Ascending aorta (tissue), 2 donors: ENCODE measurements at regions of chr15 and their contacts with region 1.

Region 1: GRCh38 chr15:67048281-67049279 is 16.8 kb upstream of the SMAD3 start:
- DNase-seq: peak; percentile 40 to 91
- H3K4me3 ChIP-seq: no peak overlapping the region
- H3K27ac ChIP-seq: peak overlapping the region; percentile 94 to 95
- H3K4me1 ChIP-seq: peaks cover 12 to 66% of the 10 kb centered on the region in 2 donors
- H3K27me3 ChIP-seq: no peaks in the 10 kb centered on the region
- CTCF ChIP-seq: no peak

Region 2: GRCh38 chr15:66761726-66762589 is 286.6 kb before region 1 on chr15:
- intact Hi-C with region 1: no loop called
- DNase-seq: no peak
- H3K4me3 ChIP-seq: no peak overlapping the region
- H3K27ac ChIP-seq: peak overlapping the region; percentile 76 to 95
- H3K4me1 ChIP-seq: peaks cover 37 to 83% of the 10 kb centered on the region in 2 donors
- H3K27me3 ChIP-seq: no peaks in the 10 kb centered on the region
- CTCF ChIP-seq: no peak

Region 3: GRCh38 chr15:66883322-66883911 is 165.2 kb before region 1 on chr15:
- intact Hi-C with region 1: loop called (anchors 5 kb)
- DNase-seq: peak; percentile 80 to 99
- H3K4me3 ChIP-seq: no peak overlapping the region
- H3K27ac ChIP-seq: peak overlapping the region; percentile 63 to 73
- H3K4me1 ChIP-seq: peaks cover 6 to 27% of the 10 kb centered on the region in 2 donors
- H3K27me3 ChIP-seq: no peaks in the 10 kb centered on the region
- CTCF ChIP-seq: no peak

Region 4: GRCh38 chr15:67024314-67024997 is 24.1 kb before region 1 on chr15:
- intact Hi-C with region 1: loop called (anchors 1 kb)
- DNase-seq: peak; percentile 55 to 93
- H3K4me3 ChIP-seq: no peak overlapping the region
- H3K27ac ChIP-seq: peak overlapping the region; percentile 55 to 60
- H3K4me1 ChIP-seq: peaks cover 14 to 27% of the 10 kb centered on the region in 2 donors
- H3K27me3 ChIP-seq: no peaks in the 10 kb centered on the region
- CTCF ChIP-seq: no peak

Region 5: DNA sequence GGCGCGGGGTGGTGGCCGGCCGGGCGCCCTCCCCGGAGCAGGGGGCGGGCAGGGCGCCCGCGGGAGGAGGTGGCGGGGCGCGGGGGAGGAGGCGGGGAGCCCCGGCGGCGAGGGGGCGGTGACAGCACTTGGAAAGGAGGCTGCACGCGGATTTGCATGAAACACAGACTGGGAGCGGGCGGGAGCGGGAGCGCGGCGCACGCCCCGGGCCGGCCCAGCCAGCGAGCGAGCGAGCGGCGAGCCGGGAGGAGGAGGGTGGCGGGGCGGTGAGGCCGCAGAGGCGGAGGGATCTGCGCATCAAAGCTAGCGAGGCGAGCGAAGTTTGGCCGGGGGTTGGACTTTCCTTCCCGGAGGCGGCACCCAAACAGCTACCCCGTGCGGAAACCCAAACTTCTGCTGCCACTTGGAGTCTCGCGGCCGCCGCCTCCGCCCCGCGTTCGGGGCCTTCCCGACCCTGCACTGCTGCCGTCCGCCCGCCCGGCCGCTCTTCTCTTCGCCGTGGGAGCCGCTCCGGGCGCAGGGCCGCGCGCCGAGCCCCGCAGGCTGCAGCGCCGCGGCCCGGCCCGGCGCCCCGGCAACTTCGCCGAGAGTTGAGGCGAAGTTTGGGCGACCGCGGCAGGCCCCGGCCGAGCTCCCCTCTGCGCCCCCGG is 17.0 kb after region 1 on chr15 and contains the start of gene SMAD3:
- intact Hi-C with region 1: loop called (anchors 1 kb)
- DNase-seq: peak; percentile 57 to 94
- H3K4me3 ChIP-seq: peak within 1 kb of the TSS; percentile 85 to 94
- H3K27ac ChIP-seq: peak within 1 kb of the TSS; percentile 96
- H3K4me1 ChIP-seq: peaks cover 8 to 19% of the 10 kb centered on the region in 2 donors
- H3K27me3 ChIP-seq: no peaks in the 10 kb centered on the region
- CTCF ChIP-seq: no peak
- total RNA-seq, gene SMAD3: 89.3 TPM

Region 6: GRCh38 chr15:67074886-67075229 is 26.3 kb after region 1 on chr15:
- intact Hi-C with region 1: loop called (anchors 2 kb)
- DNase-seq: no peak
- H3K4me3 ChIP-seq: no peak overlapping the region
- H3K27ac ChIP-seq: peak overlapping the region; percentile 64 to 68
- H3K4me1 ChIP-seq: peaks cover 20 to 67% of the 10 kb centered on the region in 2 donors
- H3K27me3 ChIP-seq: no peaks in the 10 kb centered on the region
- CTCF ChIP-seq: no peak

Region 7: GRCh38 chr15:67120839-67121643 is 72.5 kb after region 1 on chr15:
- intact Hi-C with region 1: loop called (anchors 5 kb)
- DNase-seq: peak; percentile 93 to 96
- H3K4me3 ChIP-seq: peak overlapping the region; percentile 29 to 41
- H3K27ac ChIP-seq: peak overlapping the region; percentile 81 to 92
- H3K4me1 ChIP-seq: peaks cover 22 to 73% of the 10 kb centered on the region in 2 donors
- H3K27me3 ChIP-seq: no peaks in the 10 kb centered on the region
- CTCF ChIP-seq: no peak

Region 8: DNA sequence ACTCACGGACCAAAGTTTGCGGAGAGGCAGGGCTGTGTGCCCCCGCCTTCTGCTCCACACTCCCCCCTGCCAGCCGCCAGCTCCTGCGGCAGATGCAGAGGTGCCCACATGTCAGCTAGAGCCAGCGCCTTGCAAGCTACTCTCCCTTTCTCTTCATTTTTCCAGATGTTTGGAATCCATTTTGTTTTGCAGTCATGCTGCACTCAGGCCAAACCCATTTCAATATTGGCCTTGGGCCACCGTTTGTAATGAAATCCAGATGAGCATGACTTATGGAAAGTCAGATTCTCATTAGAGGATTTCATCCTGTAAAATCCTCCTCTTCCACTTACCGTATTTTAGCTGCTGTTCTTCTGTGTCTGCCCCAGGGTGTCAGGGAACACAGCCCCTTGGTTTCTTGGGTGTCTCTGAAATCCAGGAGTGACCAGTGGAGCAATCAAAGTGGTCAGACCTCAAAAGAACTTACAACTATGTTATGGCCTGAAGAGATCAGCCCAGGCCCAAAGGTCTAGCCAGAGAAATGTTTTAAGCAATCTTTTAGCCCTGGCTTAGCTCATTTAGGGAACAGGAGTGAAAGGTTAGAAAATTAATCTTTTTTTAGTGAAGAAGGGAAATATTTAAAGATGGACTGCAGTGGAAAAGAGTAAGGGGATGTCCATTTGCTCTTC is 140.1 kb after region 1 on chr15:
- intact Hi-C with region 1: loop called (anchors 2 kb)
- DNase-seq: no peak
- H3K4me3 ChIP-seq: no peak overlapping the region
- H3K27ac ChIP-seq: peak overlapping the region; percentile 92 to 95
- H3K4me1 ChIP-seq: peaks cover 30 to 47% of the 10 kb centered on the region in 2 donors
- H3K27me3 ChIP-seq: no peaks in the 10 kb centered on the region
- CTCF ChIP-seq: no peak

Region 9: DNA sequence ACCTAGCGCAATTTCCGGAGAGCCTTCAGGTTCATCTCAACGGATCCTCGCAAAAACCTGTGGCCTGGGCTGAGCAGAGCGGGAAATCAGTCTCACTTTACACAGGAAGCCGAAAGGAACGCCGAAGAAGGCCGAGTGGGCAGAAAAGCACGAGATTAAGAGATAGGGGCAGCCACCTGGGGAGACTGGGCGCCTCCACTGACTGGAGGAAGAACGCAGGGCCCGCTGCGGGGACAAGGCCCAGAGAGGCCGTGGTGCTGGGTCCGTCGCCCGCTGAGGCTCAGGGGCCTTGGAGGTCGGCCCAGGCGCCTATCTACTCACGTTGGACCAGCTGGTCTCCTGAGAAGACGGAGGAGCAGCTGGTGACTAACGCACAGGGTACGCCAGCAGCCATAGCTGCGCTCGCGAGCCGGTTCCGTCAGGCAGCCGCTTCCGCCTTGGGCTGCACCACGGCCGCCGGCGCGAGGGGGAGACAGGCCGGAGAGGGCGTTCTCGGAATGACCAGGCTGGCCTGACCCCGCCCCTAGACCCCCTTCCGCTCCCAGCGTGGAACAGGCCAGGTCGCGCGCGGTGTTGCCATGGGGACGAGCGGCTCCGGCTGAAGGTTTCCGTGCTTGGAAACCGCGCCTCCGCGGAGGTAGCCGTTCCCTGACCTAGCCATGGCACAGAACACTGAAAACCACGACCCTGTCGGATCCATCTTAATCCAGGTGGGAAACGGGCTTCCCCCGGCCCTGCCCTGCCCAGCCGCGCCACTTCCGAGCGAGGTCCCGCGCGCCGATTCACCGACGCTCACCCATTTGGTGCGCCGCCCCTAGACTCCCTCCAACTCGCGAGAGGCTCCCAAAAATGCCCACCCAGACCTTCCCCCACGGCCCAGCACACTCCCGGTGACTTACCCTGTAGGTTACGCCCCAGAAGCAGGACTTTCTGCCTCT is 205.9 kb after region 1 on chr15 and contains the starts of genes AAGAB and IQCH:
- intact Hi-C with region 1: no loop called
- DNase-seq: peak; percentile 89 to 98
- H3K4me3 ChIP-seq: peak within 1 kb of the TSS; percentile 70 to 91
- H3K27ac ChIP-seq: peak within 1 kb of the TSS; percentile 81 to 96
- H3K4me1 ChIP-seq: peaks cover 5 to 6% of the 10 kb centered on the region in 2 donors
- H3K27me3 ChIP-seq: no peaks in the 10 kb centered on the region
- CTCF ChIP-seq: no peak
- total RNA-seq, gene AAGAB: 27.8 TPM
- total RNA-seq, gene IQCH: not detected